Ascending aorta (tissue), 2 donors: ENCODE measurements at regions of chr4 and their contacts with region 1.

Region 1: GRCh38 chr4:21790438-21791029 is 158.0 kb downstream of the KCNIP4 start:
- DNase-seq: no peak
- H3K4me3 ChIP-seq: no peak overlapping the region
- H3K27ac ChIP-seq: no peak overlapping the region
- H3K4me1 ChIP-seq: no peaks in the 10 kb centered on the region
- H3K27me3 ChIP-seq: no peaks in the 10 kb centered on the region
- CTCF ChIP-seq: peak in 2 of 3 experiments; percentile 17 to 39

Region 2: GRCh38 chr4:22389240-22389870 is 598.8 kb after region 1 on chr4:
- intact Hi-C with region 1: loop called (anchors 2 kb)
- DNase-seq: no peak
- H3K4me3 ChIP-seq: no peak overlapping the region
- H3K27ac ChIP-seq: no peak overlapping the region
- H3K4me1 ChIP-seq: no peaks in the 10 kb centered on the region
- H3K27me3 ChIP-seq: no peaks in the 10 kb centered on the region
- CTCF ChIP-seq: peak; percentile 18 to 63 (median 53)